Left lung (tissue), 14 donors: ENCODE measurements at regions of chr12 and their contacts with region 1.

Region 1: DNA sequence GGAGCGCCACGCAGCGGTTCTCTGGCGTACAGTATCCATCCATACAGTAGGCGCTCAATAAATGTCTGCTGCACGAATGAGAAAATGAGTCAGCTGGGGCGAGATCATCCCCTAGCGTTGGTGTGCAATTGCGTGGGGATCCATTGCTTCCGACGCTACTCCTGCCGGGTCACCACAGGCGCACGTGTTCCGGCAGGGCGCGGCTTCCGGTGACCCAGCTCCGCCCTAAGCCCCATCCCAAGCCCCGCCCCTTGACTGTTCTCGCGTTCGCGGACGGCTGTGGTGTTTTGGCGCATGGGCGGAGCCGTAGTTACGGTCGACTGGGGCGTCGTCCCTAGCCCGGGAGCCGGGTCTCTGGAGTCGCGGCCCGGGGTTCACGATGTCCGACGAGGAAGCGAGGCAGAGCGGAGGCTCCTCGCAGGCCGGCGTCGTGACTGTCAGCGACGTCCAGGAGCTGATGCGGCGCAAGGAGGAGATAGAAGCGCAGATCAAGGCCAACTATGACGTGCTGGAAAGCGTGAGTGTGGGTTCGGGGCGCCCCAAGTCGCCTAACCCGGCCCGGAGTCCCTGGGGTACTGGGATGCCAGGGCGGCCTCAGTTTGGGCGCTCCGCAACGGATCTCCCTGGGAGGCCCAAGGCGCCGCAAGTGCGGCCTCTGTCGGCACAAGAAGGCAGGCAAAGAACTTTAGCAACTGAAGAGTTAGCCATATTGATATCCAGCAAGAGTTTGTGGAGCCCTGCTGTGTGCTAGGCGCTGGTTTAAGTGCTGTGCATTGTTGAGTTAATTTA is at the start of gene PSMD9:
- DNase-seq: peak; percentile 93 to 100 (median 98)
- ATAC-seq: peak; percentile 99
- H3K4me3 ChIP-seq: peak within 1 kb of the TSS; percentile 63 to 72
- H3K27ac ChIP-seq: peak within 1 kb of the TSS; percentile 91 to 98
- H3K4me1 ChIP-seq: peaks cover 16 to 27% of the 10 kb centered on the region in 2 donors
- H3K27me3 ChIP-seq: no peaks in the 10 kb centered on the region
- CTCF ChIP-seq: peak; percentile 42 to 47
- polyA plus RNA-seq, gene PSMD9: 44.2 to 49.9 (median 45.4) TPM

Region 2: DNA sequence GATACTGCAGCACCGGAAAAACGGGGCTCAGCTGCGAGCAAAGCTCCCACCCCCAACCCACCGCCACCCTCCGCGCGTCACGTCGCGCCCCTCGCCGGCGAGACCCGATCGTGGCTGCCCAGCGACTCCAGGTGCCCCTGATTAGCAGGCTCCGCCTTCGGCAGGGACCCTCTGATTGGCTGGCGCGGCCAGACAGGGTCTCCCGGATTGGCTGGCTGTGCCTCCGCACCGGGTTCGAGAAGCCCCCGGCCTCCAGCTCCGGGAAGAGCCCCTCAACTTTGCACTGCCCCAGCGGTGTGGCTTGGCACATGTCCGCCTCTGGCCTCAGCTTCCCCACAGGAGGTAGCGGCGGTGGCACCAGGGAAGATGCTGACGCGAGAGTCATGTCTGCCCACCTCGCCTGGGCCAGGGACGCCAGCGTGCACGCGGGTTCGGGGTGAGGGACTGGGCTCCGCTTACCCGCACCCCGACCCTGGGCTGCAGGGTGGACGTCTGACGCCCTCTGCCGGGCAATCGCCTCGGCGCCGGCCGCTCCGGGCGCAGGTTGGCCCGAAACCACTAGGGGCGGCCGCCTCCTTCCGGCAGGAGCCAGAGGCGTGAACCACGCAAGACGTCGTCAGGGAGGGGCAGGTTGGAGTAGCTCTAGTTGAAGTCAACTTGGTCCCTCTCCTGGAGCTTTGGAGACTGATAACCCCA is 94.7 kb before region 1 on chr12:
- intact Hi-C with region 1: loop called in 1 of 2 experiments (anchors 10 kb)
- DNase-seq: peak; percentile 87 to 99 (median 94)
- ATAC-seq: peak; percentile 82
- H3K4me3 ChIP-seq: peak overlapping the region; percentile 46 to 69
- H3K27ac ChIP-seq: peak overlapping the region; percentile 82 to 100
- H3K4me1 ChIP-seq: peaks cover 40 to 99% of the 10 kb centered on the region in 2 donors
- H3K27me3 ChIP-seq: no peaks in the 10 kb centered on the region
- CTCF ChIP-seq: peak; percentile 99 to 100

Region 3: GRCh38 chr12:121849665-121850064 is 39.0 kb before region 1 on chr12:
- intact Hi-C with region 1: no loop called
- DNase-seq: no peak
- ATAC-seq: no peak
- H3K4me3 ChIP-seq: no peak overlapping the region
- H3K27ac ChIP-seq: no peak overlapping the region
- H3K4me1 ChIP-seq: no peaks in the 10 kb centered on the region
- H3K27me3 ChIP-seq: no peaks in the 10 kb centered on the region
- CTCF ChIP-seq: no peak